ENCODE measurements at regions of chr2 and their contacts with region 1.

Region 1: GRCh38 chr2:41890341-41890740 is 157.5 kb upstream of the PKDCC start:
- DNase-seq: no peak
- ATAC-seq: no peak
- H3K4me3 ChIP-seq: no peak overlapping the region
- H3K27ac ChIP-seq: no peak overlapping the region
- H3K4me1 ChIP-seq: peaks cover 9 to 18% of the 10 kb centered on the region in 2 donors
- H3K27me3 ChIP-seq: no peaks in the 10 kb centered on the region
- CTCF ChIP-seq: no peak
- POLR2A ChIP-seq: no peak

Region 2: GRCh38 chr2:41906338-41906725 is 16.0 kb after region 1 on chr2:
- in situ Hi-C with region 1: no loop called
- intact Hi-C with region 1: loop called (anchors 2 kb)
- DNase-seq: no peak
- ATAC-seq: no peak
- H3K4me3 ChIP-seq: no peak overlapping the region
- H3K27ac ChIP-seq: no peak overlapping the region
- H3K4me1 ChIP-seq: no peaks in the 10 kb centered on the region
- H3K27me3 ChIP-seq: no peaks in the 10 kb centered on the region
- CTCF ChIP-seq: no peak
- POLR2A ChIP-seq: no peak

Region 3: DNA sequence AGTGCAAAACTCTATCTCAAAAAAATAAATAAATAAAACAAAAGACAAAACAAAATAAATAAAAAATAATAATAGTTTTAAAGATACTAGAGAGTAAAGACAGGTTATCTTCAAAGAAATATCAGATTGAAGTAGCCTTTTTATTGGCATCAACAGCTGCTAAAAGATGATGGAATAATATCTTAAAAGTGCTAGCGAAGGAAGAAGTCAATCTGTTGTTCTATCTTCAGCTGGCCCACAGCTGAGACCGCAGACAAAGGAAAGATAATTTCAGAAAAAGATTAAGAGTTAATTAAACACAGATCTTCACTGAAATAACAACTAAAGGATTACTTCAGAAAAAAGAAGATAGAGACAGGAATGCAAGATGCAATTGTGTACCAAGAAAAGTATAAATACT is 27.2 kb after region 1 on chr2:
- in situ Hi-C with region 1: no loop called
- intact Hi-C with region 1: no loop called
- DNase-seq: no peak
- ATAC-seq: no peak
- H3K4me3 ChIP-seq: no peak overlapping the region
- H3K27ac ChIP-seq: no peak overlapping the region
- H3K4me1 ChIP-seq: peaks cover 15 to 19% of the 10 kb centered on the region in 2 donors
- H3K27me3 ChIP-seq: no peaks in the 10 kb centered on the region
- CTCF ChIP-seq: no peak
- POLR2A ChIP-seq: no peak